Activated CD8-positive, alpha-beta T cell treated with anti-CD3 and anti-CD28 coated beads, Interleukin-2, amount 10 ng/mL, durations not matched to agents 7 days and 5 days (primary cell): ENCODE measurements at regions of chr19 and their contacts with region 1.

Region 1: DNA sequence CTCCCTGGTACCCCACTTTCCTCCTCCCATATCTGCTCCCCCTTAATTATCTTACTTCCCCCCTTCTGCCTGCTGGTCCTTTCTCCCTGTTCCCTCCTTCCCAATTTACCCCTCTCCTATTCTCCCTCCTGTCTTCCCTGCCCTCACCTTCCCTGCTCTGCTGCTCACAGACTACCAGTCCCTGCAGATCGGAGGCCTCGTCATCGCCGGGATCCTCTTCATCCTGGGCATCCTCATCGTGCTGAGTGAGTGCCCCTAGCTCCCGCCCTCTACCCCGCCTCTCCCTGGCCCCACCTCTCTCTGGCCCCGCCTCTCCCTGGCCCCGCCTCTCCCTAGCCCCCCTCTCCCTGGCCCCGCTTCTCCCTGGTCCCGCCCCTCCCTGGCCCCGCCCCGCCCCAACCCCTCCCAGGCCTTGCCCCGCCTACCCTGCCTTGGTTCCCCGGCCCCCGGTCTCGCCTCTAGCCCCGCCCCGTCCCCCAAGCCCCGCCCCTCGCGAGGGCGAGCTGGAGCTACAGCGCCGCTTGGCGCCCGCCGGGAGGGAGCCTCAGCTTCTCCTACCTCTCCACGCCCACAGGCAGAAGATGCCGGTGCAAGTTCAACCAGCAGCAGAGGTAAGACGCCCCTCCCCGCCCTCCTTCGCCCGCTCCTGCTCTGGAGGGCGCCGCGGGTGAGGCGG is 2.0 kb upstream of the FXYD7 start:
- DNase-seq: peak; percentile 97
- ATAC-seq: peak; percentile 90
- H3K4me3 Mint-ChIP-seq: peak overlapping the region; percentile 77
- H3K27ac Mint-ChIP-seq: peak overlapping the region; percentile 81
- H3K4me1 Mint-ChIP-seq: peaks cover 36% of the 10 kb centered on the region
- H3K27me3 Mint-ChIP-seq: peaks cover 33% of the 10 kb centered on the region

Region 2: DNA sequence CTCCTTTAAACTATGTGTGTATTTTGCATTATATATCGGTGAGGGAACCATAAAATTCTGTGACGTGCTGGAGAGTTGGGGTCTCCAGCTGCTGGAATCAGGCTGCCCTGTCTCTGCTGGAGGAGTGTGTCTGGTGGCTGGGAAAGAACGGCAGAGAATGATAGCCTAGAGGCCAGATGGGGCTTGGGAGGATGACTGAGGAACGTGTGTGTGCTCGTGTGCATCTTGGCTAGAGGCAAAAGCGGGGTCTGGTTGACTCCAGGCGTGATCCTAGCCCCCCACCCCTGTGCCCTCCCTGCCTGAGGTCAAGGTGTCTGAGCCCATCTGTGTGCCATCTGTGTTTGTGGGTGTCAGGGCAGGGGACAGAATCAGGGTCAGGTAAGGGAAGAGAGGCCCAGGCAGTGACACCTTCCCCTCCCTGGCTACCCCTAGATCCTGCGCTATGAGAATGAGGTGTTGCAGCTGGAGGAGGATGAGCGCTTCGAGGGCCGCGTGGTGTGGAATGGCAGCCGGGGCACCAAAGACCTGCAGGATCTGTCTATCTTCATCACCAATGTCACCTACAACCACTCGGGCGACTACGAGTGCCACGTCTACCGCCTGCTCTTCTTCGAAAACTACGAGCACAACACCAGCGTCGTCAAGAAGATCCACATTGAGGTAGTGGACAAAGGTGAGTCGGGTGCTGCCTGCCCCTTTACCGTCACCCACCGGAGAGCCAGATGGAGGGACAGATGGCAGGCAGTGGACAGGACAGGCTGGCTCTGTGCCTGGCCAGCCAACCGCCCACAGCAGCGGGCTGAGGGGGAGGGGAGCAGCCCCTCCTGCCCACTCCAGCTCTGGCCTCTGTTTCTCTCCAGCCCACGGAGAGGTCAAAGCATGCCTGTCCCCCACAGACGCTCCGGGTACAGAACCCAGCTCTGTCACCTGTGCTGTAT is 107.8 kb before region 1 on chr19:
- CTCF ChIA-PET with region 1: no interaction called
- POLR2A ChIA-PET with region 1: no interaction called
- DNase-seq: no peak
- ATAC-seq: no peak
- H3K4me3 Mint-ChIP-seq: no peak overlapping the region
- H3K27ac Mint-ChIP-seq: no peak overlapping the region
- H3K4me1 Mint-ChIP-seq: peaks cover 10% of the 10 kb centered on the region
- H3K27me3 Mint-ChIP-seq: peaks cover 32% of the 10 kb centered on the region

Region 3: DNA sequence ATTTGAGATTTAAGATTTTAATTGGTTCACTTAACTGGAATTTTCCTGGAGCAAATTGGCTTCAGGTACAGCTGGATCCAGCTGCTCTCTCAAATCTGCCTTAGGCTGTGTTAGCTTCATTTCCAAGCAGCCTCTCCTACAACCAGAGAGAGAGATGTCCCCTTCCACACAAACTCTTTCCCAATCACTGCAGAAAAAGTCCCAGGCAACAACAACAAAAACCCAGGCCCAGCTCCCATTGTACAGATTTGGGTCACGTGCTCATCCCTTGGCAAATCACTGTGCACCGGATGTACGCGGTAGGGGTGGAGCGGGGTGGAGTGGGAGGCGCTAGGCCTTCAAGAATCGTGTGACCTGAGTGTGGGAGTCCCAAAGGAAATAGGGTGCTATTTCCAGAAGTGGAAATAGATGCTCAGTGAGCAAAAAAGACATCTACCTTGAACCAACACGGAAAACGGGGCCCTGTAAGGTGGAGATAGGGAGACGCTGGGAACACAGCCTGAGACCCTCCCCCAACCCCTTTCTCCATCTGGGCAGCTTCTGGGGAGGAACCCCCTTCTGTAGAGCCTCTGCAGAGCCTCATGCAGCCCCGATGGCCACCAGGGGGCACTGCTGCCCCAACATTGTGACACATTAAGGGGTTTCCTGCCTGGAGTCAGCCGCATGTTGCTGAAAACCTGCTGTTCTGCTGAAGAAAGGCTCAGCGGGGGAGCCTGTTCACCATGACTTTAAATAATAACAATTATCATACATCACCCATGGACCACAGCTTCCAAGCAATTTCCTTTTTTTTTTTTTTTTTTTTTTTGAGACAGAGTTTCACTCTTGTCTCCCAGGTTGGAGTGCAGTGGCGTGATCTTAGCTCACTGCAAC is 74.2 kb before region 1 on chr19:
- CTCF ChIA-PET with region 1: interaction called, 47 read pairs
- POLR2A ChIA-PET with region 1: interaction called, 3 read pairs
- DNase-seq: peak; percentile 92
- ATAC-seq: peak; percentile 95
- H3K4me3 Mint-ChIP-seq: no peak overlapping the region
- H3K27ac Mint-ChIP-seq: no peak overlapping the region
- H3K4me1 Mint-ChIP-seq: peaks cover 13% of the 10 kb centered on the region
- H3K27me3 Mint-ChIP-seq: no peaks in the 10 kb centered on the region

Region 4: DNA sequence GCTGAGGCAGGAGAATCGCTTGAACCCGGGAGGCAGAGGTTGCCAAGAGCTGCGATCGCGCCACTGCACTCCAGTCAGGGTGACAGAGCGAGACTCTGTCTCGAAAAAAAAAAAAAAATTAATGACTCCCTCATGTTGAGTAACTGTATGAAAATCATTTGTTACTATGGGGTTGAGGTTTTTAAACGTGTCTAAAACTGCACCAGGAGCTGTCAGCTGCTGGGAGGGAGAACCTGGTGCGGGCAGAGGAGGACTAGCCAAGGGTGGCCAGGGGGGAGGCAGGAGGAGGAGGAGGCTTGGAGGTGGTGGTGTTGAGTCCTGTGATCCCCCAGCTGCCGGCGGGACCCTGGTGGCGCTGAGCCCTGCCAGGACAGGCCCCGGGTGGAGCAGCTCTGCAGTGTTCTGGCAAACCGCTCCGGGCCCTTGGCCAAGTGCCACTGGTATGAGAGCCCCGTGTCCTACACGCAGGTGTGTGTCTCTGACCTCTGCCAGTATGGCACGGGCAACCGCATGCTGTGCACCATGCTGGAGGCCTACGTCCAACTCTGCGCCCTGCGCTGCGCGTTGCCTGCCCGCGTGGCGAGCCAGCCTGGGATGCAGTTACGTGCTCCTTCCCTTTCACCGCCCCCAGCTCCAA is 42.6 kb before region 1 on chr19:
- CTCF ChIA-PET with region 1: no interaction called
- POLR2A ChIA-PET with region 1: no interaction called
- DNase-seq: no peak
- ATAC-seq: no peak
- H3K4me3 Mint-ChIP-seq: no peak overlapping the region
- H3K27ac Mint-ChIP-seq: no peak overlapping the region
- H3K4me1 Mint-ChIP-seq: no peaks in the 10 kb centered on the region
- H3K27me3 Mint-ChIP-seq: no peaks in the 10 kb centered on the region

Region 5: DNA sequence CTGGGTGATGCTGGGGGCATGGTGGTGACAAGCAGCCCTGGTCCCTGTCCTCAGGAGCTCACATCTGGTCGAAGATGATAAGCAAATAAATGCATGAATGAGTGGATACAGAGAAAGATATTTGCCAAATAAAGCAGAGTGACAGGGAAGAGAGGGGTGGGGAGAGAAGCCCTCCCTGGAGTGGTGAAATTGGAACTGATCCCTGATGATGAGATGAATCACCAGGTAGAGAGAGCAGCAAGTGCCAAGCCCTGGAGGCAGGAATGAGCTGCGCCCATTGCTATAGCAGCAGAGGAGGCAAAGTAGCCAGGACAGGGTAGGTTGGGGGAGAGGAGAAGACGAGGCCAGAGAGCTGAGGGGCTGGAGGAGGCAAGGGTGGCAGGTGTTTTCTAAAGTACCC is 27.1 kb after region 1 on chr19:
- CTCF ChIA-PET with region 1: interaction called, 10 read pairs
- POLR2A ChIA-PET with region 1: interaction called, 4 read pairs
- DNase-seq: no peak
- ATAC-seq: no peak
- H3K4me3 Mint-ChIP-seq: no peak overlapping the region
- H3K27ac Mint-ChIP-seq: peak overlapping the region; percentile 89
- H3K4me1 Mint-ChIP-seq: peaks cover 57% of the 10 kb centered on the region
- H3K27me3 Mint-ChIP-seq: no peaks in the 10 kb centered on the region

Region 6: DNA sequence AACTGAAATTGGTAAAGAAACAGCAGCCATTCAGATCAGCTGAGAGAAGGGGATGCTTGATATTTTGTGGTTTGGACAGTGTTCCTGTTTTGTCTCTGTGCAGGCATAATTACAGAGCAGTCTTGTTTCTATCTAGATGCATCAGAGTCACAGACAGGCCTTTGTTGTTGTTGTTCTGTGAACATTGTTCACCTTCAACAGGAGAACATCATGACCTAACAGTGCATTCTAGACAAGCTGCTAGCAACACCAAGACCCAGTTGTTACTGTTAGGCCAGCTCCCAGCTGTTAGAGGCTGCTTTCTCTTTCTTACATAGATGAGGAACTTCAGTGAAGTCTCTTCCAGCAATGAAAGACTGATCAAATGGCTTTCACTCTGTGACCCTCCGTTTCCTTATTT is 99.2 kb after region 1 on chr19:
- CTCF ChIA-PET with region 1: interaction called, 16 read pairs
- POLR2A ChIA-PET with region 1: interaction called, 3 read pairs
- DNase-seq: no peak
- ATAC-seq: peak; percentile 58
- H3K4me3 Mint-ChIP-seq: peak overlapping the region; percentile 35
- H3K27ac Mint-ChIP-seq: peak overlapping the region; percentile 78
- H3K4me1 Mint-ChIP-seq: peaks cover 19% of the 10 kb centered on the region
- H3K27me3 Mint-ChIP-seq: peaks cover 5% of the 10 kb centered on the region

Region 7: DNA sequence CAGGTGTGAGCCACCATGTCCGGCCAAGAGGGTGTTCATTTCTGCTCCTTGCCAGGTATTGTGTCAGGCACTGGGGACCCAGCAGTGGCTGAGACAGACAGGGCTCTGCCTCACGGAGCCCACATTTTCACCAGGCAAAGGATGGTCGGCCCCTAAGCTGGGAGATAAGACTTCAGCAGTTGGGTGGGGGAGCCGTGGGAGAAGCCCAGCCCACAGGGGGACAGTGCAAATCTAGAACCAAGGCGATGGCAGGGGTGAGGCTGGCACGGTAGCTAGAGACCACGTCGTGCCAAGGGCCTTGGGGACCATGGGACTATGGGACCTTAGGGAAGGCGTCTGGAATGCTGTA is 116.0 kb after region 1 on chr19:
- CTCF ChIA-PET with region 1: no interaction called
- POLR2A ChIA-PET with region 1: no interaction called
- DNase-seq: no peak
- ATAC-seq: no peak
- H3K4me3 Mint-ChIP-seq: no peak overlapping the region
- H3K27ac Mint-ChIP-seq: no peak overlapping the region
- H3K4me1 Mint-ChIP-seq: peaks cover 12% of the 10 kb centered on the region
- H3K27me3 Mint-ChIP-seq: no peaks in the 10 kb centered on the region